ENCODE measurements at regions of chr3 and their contacts with region 1.

Region 1: GRCh38 chr3:149534671-149535332 is 60.3 kb downstream of the TM4SF4 start:
- DNase-seq: no peak
- ATAC-seq: no peak
- H3K4me3 ChIP-seq: no peak overlapping the region
- H3K27ac ChIP-seq: peak overlapping the region in 1 of 2 donors; percentile 32
- H3K4me1 ChIP-seq: peaks cover 12 to 23% of the 10 kb centered on the region in 2 donors
- H3K27me3 ChIP-seq: no peaks in the 10 kb centered on the region

Region 2: GRCh38 chr3:149572796-149573414 is 38.1 kb after region 1 on chr3:
- intact Hi-C with region 1: loop called in 1 of 2 experiments (anchors 5 kb)
- DNase-seq: peak in 1 of 2 donors; percentile 68
- ATAC-seq: peak; percentile 73
- H3K4me3 ChIP-seq: no peak overlapping the region
- H3K27ac ChIP-seq: peak overlapping the region in 1 of 2 donors; percentile 28
- H3K4me1 ChIP-seq: peaks cover 9 to 13% of the 10 kb centered on the region in 2 donors
- H3K27me3 ChIP-seq: no peaks in the 10 kb centered on the region

Measured in aorta (tissue), 5 donors.